GM12878 (cell line): ENCODE measurements at regions of chr15 and their contacts with region 1.

Region 1: DNA sequence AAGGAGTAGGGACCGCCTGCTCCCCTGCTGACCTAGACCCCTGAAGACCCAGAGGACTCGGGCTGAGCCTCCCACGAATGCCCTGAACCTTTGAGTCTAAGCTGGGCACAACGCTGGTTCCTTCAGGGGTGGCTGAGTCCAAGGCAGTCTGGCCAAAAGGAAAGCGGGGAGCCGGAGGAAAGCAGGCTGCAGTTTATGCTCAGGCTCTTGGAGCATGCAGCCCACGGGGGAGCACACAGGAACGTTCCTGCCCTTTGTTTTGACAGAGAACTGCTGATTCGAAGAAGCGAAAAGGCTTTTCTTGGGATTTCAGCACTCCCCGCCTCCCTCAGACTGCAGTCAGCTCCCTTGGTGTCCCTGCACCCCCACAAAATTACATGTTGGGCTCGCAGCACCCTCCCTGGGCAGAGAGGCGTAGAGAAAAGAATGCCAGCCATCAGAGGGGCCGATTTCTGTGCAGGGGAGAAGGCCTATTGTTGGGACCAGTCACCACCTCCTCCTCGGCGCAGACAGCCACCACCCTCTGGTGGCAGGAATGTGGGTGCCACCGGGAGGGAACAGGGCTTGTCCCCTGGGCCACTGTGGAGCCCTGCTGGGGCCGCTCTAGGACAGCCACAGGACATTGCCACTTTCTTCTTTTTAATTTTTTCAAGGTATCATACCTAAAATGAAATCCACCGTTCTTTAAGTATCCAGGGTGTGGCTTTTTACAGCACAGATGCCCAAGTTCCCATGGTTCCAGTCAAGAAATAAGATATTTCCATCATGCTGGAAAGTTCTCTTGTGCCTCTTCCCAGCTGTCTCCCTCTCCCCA is 72.2 kb downstream of the SMAD6 start:
- DNase-seq: no peak
- ATAC-seq: peak; percentile 98
- H3K4me3 ChIP-seq: no peak overlapping the region
- H3K27ac ChIP-seq: no peak overlapping the region
- H3K4me1 ChIP-seq: no peaks in the 10 kb centered on the region
- H3K27me3 ChIP-seq: no peaks in the 10 kb centered on the region
- CTCF ChIP-seq: peak; percentile 66 to 87 (median 82)
- EP300 ChIP-seq: no peak
- POLR2A ChIP-seq: no peak
- RAD21 ChIP-seq: peak; percentile 75

Region 2: DNA sequence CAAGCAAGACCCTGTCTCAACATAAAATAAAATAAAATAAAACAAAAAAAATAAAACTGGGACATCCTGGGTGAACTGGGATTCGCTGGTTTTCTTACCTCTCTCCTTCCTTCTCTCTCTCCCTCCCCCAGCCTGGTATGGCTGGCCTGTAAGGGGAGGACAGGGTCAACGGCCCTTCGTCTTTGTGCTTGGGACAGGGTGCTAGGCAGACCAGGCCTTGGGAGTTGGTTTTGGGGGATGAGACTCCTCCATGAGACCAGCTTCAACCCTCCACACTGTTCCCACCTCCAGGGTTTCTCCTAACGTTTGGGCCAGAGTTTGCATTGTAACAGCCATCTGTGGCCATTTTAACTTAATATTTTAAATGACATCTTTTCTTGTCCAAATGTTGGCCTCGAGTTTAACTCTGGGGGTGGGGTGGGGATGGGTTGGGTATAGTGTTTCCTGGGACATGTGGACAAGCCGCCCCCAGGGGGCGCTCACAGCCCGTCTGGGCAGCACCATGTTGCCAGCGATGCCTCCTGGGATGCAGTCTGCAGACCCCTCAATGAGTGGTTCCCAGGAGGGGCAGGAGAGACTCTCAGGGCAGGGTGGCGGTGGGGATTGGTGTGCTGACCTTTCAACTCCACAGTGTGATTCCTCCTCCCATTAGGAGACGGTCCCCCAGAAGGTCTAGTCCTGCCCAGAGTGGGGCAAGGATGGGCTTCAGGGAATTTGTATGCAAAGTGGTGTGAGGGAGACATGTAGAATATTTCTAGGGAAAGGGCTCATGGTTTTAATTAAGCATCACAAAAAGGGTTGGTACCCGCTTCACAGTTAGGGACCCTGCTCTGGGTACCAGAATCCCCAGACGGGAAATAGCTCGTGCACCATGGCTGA is 170.7 kb before region 1 on chr15:
- CTCF ChIA-PET with region 1: interaction called, 11 read pairs
- POLR2A ChIA-PET with region 1: no interaction called
- RAD21 ChIA-PET with region 1: interaction called, 3 read pairs
- SMC1A ChIA-PET with region 1: no interaction called
- in situ Hi-C with region 1: loop called (anchors 25 kb)
- intact Hi-C with region 1: loop called (anchors 1 kb)
- DNase-seq: no peak
- ATAC-seq: peak; percentile 98
- H3K4me3 ChIP-seq: no peak overlapping the region
- H3K27ac ChIP-seq: no peak overlapping the region
- H3K4me1 ChIP-seq: no peaks in the 10 kb centered on the region
- H3K27me3 ChIP-seq: no peaks in the 10 kb centered on the region; a peak in 1 of 4 replicates
- CTCF ChIP-seq: peak; percentile 76 to 91 (median 86)
- EP300 ChIP-seq: no peak
- POLR2A ChIP-seq: no peak
- RAD21 ChIP-seq: peak; percentile 80

Region 3: GRCh38 chr15:66619151-66619903 is 154.9 kb before region 1 on chr15:
- CTCF ChIA-PET with region 1: interaction called, 44 read pairs
- POLR2A ChIA-PET with region 1: no interaction called
- RAD21 ChIA-PET with region 1: interaction called, 22 read pairs
- SMC1A ChIA-PET with region 1: interaction called, 11 read pairs
- in situ Hi-C with region 1: loop called (anchors 25 kb)
- intact Hi-C with region 1: loop called (anchors 1 kb)
- DNase-seq: no peak
- ATAC-seq: peak; percentile 94
- H3K4me3 ChIP-seq: no peak overlapping the region
- H3K27ac ChIP-seq: no peak overlapping the region
- H3K4me1 ChIP-seq: peaks cover 3% of the 10 kb centered on the region; the same call in 1 of the 2 replicates
- H3K27me3 ChIP-seq: peaks cover 0 to 6% of the 10 kb centered on the region in 2 experiments; a peak in 2 of 4 replicates
- CTCF ChIP-seq: peak; percentile 78 to 90 (median 81)
- EP300 ChIP-seq: no peak
- POLR2A ChIP-seq: no peak
- RAD21 ChIP-seq: peak; percentile 66

Region 4: GRCh38 chr15:66700802-66701421 is 73.3 kb before region 1 on chr15:
- CTCF ChIA-PET with region 1: interaction called, 5 read pairs
- POLR2A ChIA-PET with region 1: no interaction called
- RAD21 ChIA-PET with region 1: no interaction called
- SMC1A ChIA-PET with region 1: no interaction called
- in situ Hi-C with region 1: no loop called
- intact Hi-C with region 1: loop called (anchors 5 kb)
- DNase-seq: no peak
- ATAC-seq: peak; percentile 86
- H3K4me3 ChIP-seq: peak overlapping the region; percentile 93
- H3K27ac ChIP-seq: no peak overlapping the region
- H3K4me1 ChIP-seq: peaks cover 16% of the 10 kb centered on the region
- H3K27me3 ChIP-seq: peaks cover 11 to 15% of the 10 kb centered on the region in 2 experiments
- CTCF ChIP-seq: no peak
- EP300 ChIP-seq: no peak
- POLR2A ChIP-seq: no peak; the same call in 1 of the 2 replicates
- RAD21 ChIP-seq: no peak